Left cardiac atrium (tissue), 4 donors: ENCODE measurements at regions of chr1 and their contacts with region 1.

Region 1: DNA sequence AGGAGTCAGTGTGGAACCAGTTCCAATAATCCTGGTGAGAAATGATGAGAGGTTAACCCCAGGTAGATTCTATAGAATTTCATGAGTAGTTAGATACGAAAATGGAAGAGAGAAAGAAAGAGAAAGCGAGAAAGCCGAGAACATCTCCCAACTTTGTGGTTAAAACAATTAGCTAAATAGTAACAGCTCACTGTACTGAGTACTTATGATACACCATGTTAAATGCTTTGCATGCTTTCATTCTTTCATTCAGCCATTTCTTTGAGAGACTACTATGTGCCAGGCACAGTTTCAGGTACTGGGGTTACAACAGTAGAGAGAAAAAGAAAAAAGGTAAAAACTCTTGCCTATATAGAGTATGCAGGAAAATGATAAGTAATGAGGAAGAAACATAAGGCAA is 109.7 kb upstream of the SYT6 start:
- DNase-seq: no peak
- ATAC-seq: no peak

Region 2: DNA sequence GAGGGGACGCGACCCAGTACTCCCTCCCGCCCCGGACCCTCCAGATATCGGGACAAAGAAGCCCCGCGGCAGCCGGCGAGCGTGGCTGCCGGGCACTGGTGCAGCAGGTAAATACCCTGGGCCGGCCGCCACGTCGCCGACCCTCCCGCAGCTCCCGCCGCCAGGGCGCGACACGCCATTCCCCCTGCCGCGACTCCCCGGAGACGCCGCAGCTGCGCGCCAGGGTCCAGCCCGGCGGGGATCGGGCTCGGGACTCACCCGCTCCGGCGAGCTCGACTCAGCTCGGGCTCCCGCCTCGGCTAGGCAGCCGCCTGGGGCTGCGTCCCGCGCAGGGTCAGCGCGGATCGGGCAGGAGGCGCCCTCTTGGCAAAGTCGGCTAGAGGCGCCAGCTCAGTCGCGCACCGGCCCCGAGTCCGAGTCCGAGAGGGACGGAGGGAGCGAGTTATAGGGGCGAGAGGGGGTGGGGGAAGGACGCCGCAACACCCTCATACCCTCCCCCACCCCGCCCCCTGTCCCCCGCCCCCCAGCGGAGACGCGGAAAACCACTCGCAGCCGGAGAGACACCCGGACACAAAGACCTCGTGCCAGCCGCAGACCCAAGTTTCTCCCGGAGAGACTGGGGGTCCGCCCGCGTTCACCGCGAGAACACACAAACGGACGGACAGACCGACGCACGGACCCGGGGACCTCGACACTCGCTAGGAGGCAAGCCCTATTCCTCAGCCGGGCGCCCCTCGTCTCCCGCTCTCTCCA is 110.7 kb before region 1 on chr1:
- intact Hi-C with region 1: loop called in 1 of 2 experiments (anchors 10 kb)
- DNase-seq: peak; percentile 46
- ATAC-seq: peak; percentile 78 to 91

Region 3: DNA sequence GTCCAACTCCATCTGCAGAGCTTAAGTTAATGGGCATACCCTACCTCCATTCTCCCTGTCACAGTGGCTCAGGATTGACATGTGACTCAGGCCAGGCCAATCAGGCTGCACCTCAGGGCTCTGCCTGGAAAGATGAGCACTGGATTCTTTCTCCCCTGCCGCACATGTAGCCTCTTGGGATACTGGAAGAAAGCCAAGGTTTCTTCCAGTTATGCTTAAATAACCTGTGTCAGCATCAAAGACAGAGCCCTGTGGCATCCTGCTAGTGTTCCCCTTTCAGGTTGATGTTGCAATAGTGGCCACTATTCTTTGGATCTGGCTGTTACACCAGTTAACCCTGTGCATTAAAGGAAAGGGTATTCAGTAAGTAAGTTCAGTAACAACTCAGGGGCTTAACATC is 54.6 kb before region 1 on chr1:
- intact Hi-C with region 1: no loop called
- DNase-seq: no peak
- ATAC-seq: peak; percentile 53

Region 4: GRCh38 chr1:114379987-114380386 is 116.6 kb after region 1 on chr1:
- intact Hi-C with region 1: no loop called
- DNase-seq: no peak
- ATAC-seq: no peak